ENCODE measurements at regions of chr1 and their contacts with region 1.

Region 1: DNA sequence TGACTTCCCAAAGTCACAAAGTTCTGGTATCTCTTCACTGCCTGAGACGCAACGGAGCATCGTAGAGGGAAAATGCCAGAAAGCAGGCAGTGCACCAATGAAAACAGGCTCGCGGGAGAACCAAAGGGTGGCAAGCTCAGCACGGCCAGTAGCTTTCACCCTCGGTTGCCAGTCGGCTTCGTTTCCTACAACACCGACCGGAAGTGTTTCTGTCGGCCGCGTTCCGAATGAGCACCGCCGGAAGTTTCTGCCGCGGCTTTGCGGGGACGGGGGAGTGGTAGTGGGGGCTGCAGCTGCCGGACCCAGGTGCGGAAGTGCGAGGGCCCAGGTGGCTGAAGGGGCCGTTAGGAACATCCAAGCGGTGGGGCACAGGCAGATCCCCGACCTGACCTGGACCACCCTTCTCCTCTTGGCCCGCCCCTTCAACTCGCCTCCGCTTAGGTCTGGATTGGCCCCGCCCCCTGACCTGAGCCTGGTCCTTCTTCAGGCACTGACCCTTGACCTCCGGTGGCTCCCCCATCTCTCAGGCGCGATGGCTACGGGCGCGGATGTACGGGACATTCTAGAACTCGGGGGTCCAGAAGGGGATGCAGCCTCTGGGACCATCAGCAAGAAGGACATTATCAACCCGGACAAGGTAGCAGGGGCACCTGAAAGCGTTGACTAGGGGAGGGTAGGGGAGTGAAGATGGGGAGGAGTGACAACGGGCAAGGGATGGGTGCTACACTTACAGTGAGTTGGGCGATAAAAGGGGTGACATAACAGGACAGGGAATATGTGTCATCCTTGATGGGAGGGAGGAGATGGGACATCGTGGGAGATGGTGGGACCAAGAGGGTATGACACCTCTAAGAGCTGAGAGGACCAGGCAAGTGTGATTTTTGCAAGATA is at the start of gene DMAP1:
- DNase-seq: peak; percentile 69
- H3K4me3 ChIP-seq: peak within 1 kb of the TSS; percentile 100
- H3K27ac ChIP-seq: peak within 1 kb of the TSS; percentile 21
- H3K27me3 ChIP-seq: no peaks in the 10 kb centered on the region
- CTCF ChIP-seq: peak; percentile 14
- polyA plus RNA-seq, gene DMAP1: 27.0 and 31.5 TPM in 2 replicates

Region 2: DNA sequence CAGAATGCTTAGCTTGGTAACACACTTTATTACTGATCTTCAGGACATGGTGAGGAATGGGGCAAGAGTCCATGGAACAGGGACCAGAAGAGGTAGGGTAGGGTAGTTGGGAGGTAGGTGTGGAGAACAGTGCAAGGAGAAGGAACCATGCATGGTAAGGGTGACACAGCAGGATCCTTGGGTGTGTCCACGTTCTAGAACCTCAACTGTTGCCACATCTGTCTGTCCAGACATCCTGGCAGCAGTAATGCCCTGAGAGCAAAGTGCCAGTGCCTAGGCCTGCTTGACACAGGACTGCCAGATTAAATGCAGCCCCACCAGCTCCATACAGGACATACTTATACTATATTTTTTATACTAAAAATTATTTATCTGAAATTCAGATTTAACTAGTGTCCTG is 13.7 kb after region 1 on chr1:
- CTCF ChIA-PET with region 1: interaction called, 11 read pairs
- POLR2A ChIA-PET with region 1: no interaction called
- DNase-seq: no peak
- H3K4me3 ChIP-seq: no peak overlapping the region
- H3K27ac ChIP-seq: no peak overlapping the region
- H3K27me3 ChIP-seq: no peaks in the 10 kb centered on the region
- CTCF ChIP-seq: no peak

Region 3: GRCh38 chr1:44237721-44238457 is 24.4 kb after region 1 on chr1:
- CTCF ChIA-PET with region 1: interaction called, 34 read pairs
- POLR2A ChIA-PET with region 1: no interaction called
- DNase-seq: no peak
- H3K4me3 ChIP-seq: no peak overlapping the region
- H3K27ac ChIP-seq: peak overlapping the region; percentile 11
- H3K27me3 ChIP-seq: no peaks in the 10 kb centered on the region
- CTCF ChIP-seq: peak; percentile 70

Region 4: GRCh38 chr1:44464361-44464760 is 250.9 kb after region 1 on chr1:
- CTCF ChIA-PET with region 1: no interaction called
- POLR2A ChIA-PET with region 1: no interaction called
- DNase-seq: no peak
- H3K4me3 ChIP-seq: no peak overlapping the region
- H3K27ac ChIP-seq: no peak overlapping the region
- H3K27me3 ChIP-seq: peaks cover 16% of the 10 kb centered on the region
- CTCF ChIP-seq: no peak

Region 5: GRCh38 chr1:44594871-44595746 is 381.6 kb after region 1 on chr1:
- CTCF ChIA-PET with region 1: interaction called, 57 read pairs
- POLR2A ChIA-PET with region 1: no interaction called
- DNase-seq: no peak
- H3K4me3 ChIP-seq: no peak overlapping the region
- H3K27ac ChIP-seq: no peak overlapping the region
- H3K27me3 ChIP-seq: peaks cover 32% of the 10 kb centered on the region
- CTCF ChIP-seq: peak; percentile 95